CD4-positive, alpha-beta T cell (primary cell): ENCODE measurements at regions of chr13 and their contacts with region 1.

Region 1: DNA sequence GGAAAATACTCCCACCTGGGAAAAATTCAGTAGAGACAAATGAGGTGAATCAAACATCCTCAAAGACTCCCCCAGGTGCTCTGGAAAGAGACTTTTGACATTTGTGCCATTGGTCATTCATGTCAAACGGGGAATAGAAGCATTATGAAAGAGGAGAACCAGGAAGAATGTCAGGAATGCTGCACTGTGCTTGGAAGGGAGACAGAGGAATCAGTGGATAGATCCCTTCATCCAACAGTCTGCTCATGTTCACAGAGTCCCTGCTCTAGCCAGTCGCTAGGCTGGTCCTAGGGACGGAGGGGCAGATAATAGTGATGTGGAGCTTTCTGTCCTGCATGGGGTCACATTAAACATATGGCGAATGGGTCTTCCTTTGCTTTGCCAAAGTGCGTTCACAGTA is 384.4 kb downstream of the FGF9 start:
- DNase-seq: no peak
- ATAC-seq: no peak
- H3K4me3 ChIP-seq: no peak overlapping the region
- H3K4me3 Mint-ChIP-seq: no peak overlapping the region
- H3K27ac ChIP-seq: no peak overlapping the region
- H3K27ac Mint-ChIP-seq: no peak overlapping the region
- H3K4me1 ChIP-seq: peaks cover 53% of the 10 kb centered on the region
- H3K4me1 Mint-ChIP-seq: peaks cover 58% of the 10 kb centered on the region
- H3K27me3 ChIP-seq: no peaks in the 10 kb centered on the region
- H3K27me3 Mint-ChIP-seq: no peaks in the 10 kb centered on the region
- CTCF ChIP-seq: no peak

Region 2: DNA sequence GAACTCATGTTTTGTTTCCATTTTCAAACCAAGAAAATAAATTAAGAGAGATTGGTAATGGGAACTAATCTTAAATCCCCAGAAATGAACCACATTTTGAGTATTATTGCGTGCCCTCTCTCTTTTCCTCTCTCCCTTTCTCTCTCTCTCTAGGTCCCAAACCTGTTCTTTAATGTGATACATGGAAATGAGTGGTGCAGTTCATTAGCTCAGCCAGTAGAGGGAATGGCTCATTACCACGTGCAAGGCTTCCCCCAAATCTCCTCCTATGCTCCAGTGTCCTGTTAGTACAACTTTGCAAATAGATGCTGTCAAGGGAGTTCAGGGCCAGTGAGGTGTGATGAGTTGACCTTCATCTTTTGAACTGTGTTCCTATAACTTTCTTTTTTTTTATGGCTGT is 205.9 kb before region 1 on chr13:
- CTCF ChIA-PET with region 1: no interaction called
- POLR2A ChIA-PET with region 1: no interaction called
- intact Hi-C with region 1: loop called (anchors 5 kb)
- DNase-seq: peak in 5 of 14 experiments; percentile 6 to 61 (median 43)
- ATAC-seq: peak; percentile 74
- H3K4me3 ChIP-seq: no peak overlapping the region
- H3K4me3 Mint-ChIP-seq: no peak overlapping the region
- H3K27ac ChIP-seq: no peak overlapping the region
- H3K27ac Mint-ChIP-seq: no peak overlapping the region
- H3K4me1 ChIP-seq: no peaks in the 10 kb centered on the region
- H3K4me1 Mint-ChIP-seq: no peaks in the 10 kb centered on the region
- H3K27me3 ChIP-seq: peaks cover 0 to 2% of the 10 kb centered on the region in 2 experiments
- H3K27me3 Mint-ChIP-seq: no peaks in the 10 kb centered on the region
- CTCF ChIP-seq: peak; percentile 74